ENCODE measurements at regions of chr6 and their contacts with region 1.

Region 1: DNA sequence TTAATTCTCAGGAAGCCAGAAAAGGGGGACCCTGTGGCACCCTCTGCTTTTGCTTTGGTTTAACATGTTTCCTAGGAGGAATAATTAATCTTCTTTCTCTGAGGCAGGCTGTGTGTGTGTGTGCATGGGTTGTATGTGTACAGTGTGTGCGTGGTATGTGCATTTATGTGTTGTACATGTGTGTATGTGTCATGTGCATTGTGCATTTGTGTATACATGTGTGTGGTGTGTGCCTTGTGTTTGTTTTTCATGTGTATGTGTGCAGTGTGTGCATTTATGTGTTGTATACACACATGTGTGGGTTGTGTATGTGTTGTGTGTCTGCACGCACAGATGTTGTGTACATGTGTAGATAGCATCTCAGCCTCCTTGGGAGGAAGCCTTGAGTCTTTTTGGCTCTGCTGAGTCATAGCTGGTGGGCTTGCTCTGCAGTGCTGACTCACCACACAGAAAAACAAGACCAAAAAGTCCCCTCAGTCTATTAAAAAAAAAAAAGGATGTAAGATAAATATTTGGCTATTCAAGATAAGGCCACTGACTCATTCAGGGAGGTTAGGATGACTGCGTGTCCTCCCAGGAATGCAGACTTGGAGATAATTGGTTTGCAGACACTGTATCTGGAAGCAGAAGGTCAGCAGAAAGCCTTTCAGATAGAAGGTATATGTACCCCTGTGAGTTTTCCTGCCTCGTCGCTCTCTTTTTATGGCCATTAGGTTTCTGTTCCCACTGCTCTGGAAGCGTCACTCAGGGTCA is 58.6 kb downstream of the SYNJ2 start:
- DNase-seq: peak; percentile 90
- ATAC-seq: peak; percentile 59
- H3K4me3 ChIP-seq: peak overlapping the region; percentile 34; the same call in 1 of the 2 replicates
- H3K27ac ChIP-seq: peak overlapping the region; percentile 96
- H3K4me1 ChIP-seq: peaks cover 52% of the 10 kb centered on the region
- H3K27me3 ChIP-seq: no peaks in the 10 kb centered on the region
- CTCF ChIP-seq: no peak

Region 2: DNA sequence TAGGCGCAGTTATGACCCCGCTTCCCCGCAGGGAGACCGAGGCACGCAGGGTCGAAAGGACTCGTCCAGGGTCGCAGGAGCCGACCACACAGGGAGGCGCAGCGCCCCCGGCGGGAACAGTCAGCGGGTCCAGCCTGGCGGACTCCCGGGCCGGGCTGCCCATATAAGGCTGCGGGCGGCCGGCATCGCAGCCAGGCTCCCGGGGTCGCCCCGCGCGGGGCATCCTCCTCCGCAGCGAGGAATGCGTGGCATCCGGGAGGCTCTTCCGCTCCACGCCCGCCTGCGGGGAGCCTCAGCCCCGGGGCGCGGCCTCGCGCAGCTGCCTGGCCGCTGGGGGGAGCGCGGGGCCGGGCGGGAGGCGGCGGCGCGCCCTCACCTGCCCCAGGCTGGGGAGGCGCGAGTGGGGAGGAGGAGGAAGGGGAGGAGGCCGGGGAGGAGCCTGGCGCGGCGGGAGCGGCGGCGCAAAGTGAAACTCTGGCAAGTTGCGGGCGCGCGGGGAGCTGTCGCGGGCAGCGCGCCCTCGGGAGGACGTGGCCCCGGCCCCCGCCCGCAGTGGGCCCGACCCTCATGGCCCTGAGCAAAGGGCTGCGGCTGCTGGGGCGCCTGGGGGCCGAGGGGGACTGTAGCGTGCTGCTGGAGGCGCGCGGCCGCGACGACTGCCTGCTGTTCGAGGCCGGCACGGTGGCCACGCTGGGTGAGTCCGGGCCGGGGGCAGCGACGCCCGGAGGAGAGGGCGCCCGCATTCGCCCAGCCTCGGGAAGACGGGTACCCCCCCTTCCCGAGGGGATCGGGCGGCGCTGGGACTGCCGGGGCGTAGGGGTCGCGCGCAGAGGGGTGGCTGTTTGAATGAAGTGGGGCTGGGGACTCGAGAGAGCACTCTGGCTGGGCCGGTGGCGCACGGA is 58.6 kb before region 1 on chr6 and contains the start of gene SYNJ2:
- CTCF ChIA-PET with region 1: no interaction called
- POLR2A ChIA-PET with region 1: interaction called, 4 read pairs
- intact Hi-C with region 1: loop called (anchors 5 kb)
- DNase-seq: peak; percentile 72
- ATAC-seq: peak; percentile 72
- H3K4me3 ChIP-seq: peak within 1 kb of the TSS; percentile 94
- H3K27ac ChIP-seq: peak within 1 kb of the TSS; percentile 19
- H3K4me1 ChIP-seq: peaks cover 33% of the 10 kb centered on the region
- H3K27me3 ChIP-seq: no peaks in the 10 kb centered on the region
- CTCF ChIP-seq: peak; percentile 51
- total RNA-seq, gene SYNJ2: 21.5 and 24.9 TPM in 2 replicates

Region 3: DNA sequence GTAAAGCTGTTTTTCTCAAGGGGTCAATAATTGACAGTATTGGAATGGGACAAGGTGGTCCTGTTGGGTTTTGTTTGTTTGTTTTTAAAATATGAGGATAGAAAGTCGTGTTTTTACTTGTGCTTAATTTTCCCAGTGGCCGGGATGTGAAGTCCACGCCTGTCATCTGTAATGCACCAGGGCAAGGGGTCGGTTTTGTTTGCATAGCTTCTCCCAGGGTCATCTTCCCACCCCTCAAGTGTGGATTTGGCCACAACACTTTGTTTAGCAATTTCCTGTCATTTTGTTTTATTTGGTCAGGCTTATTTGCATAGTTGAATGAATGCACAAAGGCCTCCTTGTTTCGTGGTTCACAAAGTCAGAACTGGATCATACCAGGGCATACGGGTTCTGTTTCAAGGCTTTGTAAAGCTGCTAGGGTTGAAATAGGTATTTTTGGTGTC is 28.7 kb before region 1 on chr6:
- CTCF ChIA-PET with region 1: no interaction called
- POLR2A ChIA-PET with region 1: no interaction called
- intact Hi-C with region 1: loop called (anchors 2 kb)
- DNase-seq: peak; percentile 66
- ATAC-seq: peak; percentile 81
- H3K4me3 ChIP-seq: no peak overlapping the region
- H3K27ac ChIP-seq: peak overlapping the region; percentile 87
- H3K4me1 ChIP-seq: peaks cover 42% of the 10 kb centered on the region
- H3K27me3 ChIP-seq: no peaks in the 10 kb centered on the region
- CTCF ChIP-seq: no peak

Region 4: DNA sequence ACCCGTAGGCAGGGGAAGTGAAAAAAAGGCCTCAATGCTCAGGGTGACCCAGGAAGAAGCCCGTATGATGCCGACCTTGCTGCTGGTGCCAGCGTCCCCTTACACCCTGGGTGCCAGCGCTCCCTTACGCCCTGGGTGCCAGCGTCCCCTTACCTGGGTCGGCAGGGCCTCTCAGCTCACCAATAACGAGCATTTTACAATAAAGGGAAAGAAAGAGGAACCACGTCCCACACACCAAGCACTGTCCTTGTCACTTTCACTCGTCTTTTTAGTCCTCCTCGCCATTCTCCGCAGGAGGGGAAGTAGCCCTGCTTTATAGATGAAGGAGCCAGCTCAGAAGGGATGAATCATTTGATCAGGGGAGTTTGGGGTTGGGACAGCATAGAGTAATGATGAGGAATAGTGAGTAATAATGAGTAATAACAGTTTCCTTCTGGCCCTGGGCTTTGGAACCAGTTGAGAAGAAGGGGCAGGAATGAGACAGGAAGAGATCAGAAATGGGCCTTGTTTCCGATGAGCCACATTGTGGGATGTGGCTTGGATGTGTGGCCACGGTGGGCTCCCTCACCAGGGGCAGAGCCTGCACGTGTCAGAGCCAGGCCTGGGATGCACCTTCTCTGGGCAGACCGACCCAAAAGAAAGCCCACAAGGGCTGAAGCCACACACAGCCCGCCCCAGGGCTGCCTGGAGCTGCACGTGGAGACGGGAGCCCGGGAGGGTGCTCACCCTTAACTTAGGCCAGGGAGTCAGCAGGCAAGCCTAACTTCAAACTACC is 17.2 kb after region 1 on chr6:
- CTCF ChIA-PET with region 1: no interaction called
- POLR2A ChIA-PET with region 1: interaction called, 3 read pairs
- intact Hi-C with region 1: loop called (anchors 1 kb)
- DNase-seq: peak; percentile 93
- ATAC-seq: peak; percentile 80
- H3K4me3 ChIP-seq: peak overlapping the region; percentile 36; the same call in 1 of the 2 replicates
- H3K27ac ChIP-seq: peak overlapping the region; percentile 96
- H3K4me1 ChIP-seq: peaks cover 50% of the 10 kb centered on the region
- H3K27me3 ChIP-seq: no peaks in the 10 kb centered on the region
- CTCF ChIP-seq: no peak

Region 5: GRCh38 chr6:158072083-158072721 is 32.0 kb after region 1 on chr6:
- CTCF ChIA-PET with region 1: no interaction called
- POLR2A ChIA-PET with region 1: no interaction called
- intact Hi-C with region 1: loop called (anchors 1 kb)
- DNase-seq: peak; percentile 61
- ATAC-seq: peak; percentile 8; the same call in 1 of the 2 replicates
- H3K4me3 ChIP-seq: no peak overlapping the region
- H3K27ac ChIP-seq: peak overlapping the region; percentile 32; the same call in 1 of the 2 replicates
- H3K4me1 ChIP-seq: peaks cover 40% of the 10 kb centered on the region
- H3K27me3 ChIP-seq: no peaks in the 10 kb centered on the region
- CTCF ChIP-seq: peak; percentile 83

Region 6: DNA sequence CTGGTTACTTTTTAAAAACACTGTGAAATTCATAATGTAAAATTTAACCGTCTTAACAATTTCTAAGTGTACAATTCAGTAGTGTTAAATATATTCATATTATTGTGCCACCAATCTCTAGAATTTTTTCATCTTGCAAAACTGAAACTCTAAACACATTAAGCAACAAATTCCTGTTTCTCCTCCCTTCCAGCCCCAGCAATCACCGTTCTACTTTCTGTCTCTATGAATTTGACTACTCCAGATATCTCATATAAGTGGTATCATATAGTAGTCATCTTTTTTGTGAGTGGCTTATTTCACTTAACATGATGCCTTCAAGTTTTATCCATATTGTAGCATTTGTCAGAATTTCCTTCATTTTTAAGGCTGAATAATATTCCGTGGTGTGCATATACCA is 915.0 kb after region 1 on chr6:
- CTCF ChIA-PET with region 1: no interaction called
- POLR2A ChIA-PET with region 1: no interaction called
- intact Hi-C with region 1: no loop called
- DNase-seq: no peak
- ATAC-seq: no peak
- H3K4me3 ChIP-seq: no peak overlapping the region
- H3K27ac ChIP-seq: no peak overlapping the region
- H3K4me1 ChIP-seq: no peaks in the 10 kb centered on the region
- H3K27me3 ChIP-seq: no peaks in the 10 kb centered on the region
- CTCF ChIP-seq: no peak

Measured in PC-3 (cell line).